Left lung (tissue), 14 donors: ENCODE measurements at regions of chr9 and their contacts with region 1.

Region 1: GRCh38 chr9:20622330-20623020 is at the start of gene MLLT3:
- DNase-seq: peak; percentile 94 to 98 (median 96)
- ATAC-seq: peak; percentile 92
- H3K4me3 ChIP-seq: peak within 1 kb of the TSS; percentile 78 to 87
- H3K27ac ChIP-seq: peak within 1 kb of the TSS; percentile 81 to 93
- H3K4me1 ChIP-seq: peaks cover 9 to 51% of the 10 kb centered on the region in 2 donors
- H3K27me3 ChIP-seq: peaks cover 0 to 9% of the 10 kb centered on the region in 2 donors
- CTCF ChIP-seq: peak in 1 of 2 donors; percentile 5
- polyA plus RNA-seq, gene MLLT3: 26.8 to 38.2 (median 36.0) TPM

Region 2: GRCh38 chr9:20356403-20357035 is 266.0 kb before region 1 on chr9:
- intact Hi-C with region 1: loop called in 1 of 2 experiments (anchors 10 kb)
- DNase-seq: peak in 3 of 4 donors; percentile 55 to 83 (median 74)
- ATAC-seq: peak; percentile 90
- H3K4me3 ChIP-seq: no peak overlapping the region
- H3K27ac ChIP-seq: no peak overlapping the region
- H3K4me1 ChIP-seq: peaks cover 0 to 3% of the 10 kb centered on the region in 2 donors
- H3K27me3 ChIP-seq: no peaks in the 10 kb centered on the region
- CTCF ChIP-seq: peak; percentile 38 to 44

Region 3: GRCh38 chr9:20490246-20490834 is 132.1 kb before region 1 on chr9:
- intact Hi-C with region 1: no loop called
- DNase-seq: no peak
- ATAC-seq: no peak
- H3K4me3 ChIP-seq: no peak overlapping the region
- H3K27ac ChIP-seq: no peak overlapping the region
- H3K4me1 ChIP-seq: no peaks in the 10 kb centered on the region
- H3K27me3 ChIP-seq: no peaks in the 10 kb centered on the region
- CTCF ChIP-seq: no peak

Region 4: GRCh38 chr9:20538956-20539355 is 83.5 kb before region 1 on chr9:
- intact Hi-C with region 1: no loop called
- DNase-seq: no peak
- ATAC-seq: no peak
- H3K4me3 ChIP-seq: no peak overlapping the region
- H3K27ac ChIP-seq: no peak overlapping the region
- H3K4me1 ChIP-seq: no peaks in the 10 kb centered on the region
- H3K27me3 ChIP-seq: no peaks in the 10 kb centered on the region
- CTCF ChIP-seq: no peak

Region 5: DNA sequence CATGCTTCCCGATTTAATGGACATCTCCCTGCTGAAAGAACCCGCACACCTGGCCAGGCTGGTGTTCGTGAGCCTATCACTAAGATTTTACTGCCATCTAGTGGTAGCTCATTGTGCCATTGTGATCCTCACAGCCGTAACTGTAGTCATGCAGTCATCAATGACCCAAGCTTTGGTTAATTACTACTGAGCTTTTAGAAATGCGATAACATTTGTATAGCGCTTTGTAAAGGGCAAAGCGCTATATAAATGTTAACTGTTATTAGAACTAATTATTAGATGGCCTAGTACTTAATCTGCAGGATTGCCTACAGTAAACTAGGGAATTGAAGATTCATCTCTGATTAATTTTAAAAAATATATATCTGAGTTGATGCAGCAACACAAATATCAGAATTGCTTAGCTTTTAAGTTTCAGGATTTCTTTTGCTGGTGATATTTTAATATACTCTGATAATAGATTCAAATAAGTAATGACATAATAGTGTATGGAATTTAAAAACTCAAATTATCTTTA is 318.8 kb after region 1 on chr9:
- intact Hi-C with region 1: loop called in 1 of 2 experiments (anchors 10 kb)
- DNase-seq: peak in 3 of 4 donors; percentile 35 to 71 (median 42)
- ATAC-seq: peak; percentile 98
- H3K4me3 ChIP-seq: no peak overlapping the region
- H3K27ac ChIP-seq: no peak overlapping the region
- H3K4me1 ChIP-seq: peaks cover 0 to 6% of the 10 kb centered on the region in 2 donors
- H3K27me3 ChIP-seq: no peaks in the 10 kb centered on the region
- CTCF ChIP-seq: peak; percentile 77 to 82